ENCODE measurements at regions of chr1 and their contacts with region 1.

Region 1: DNA sequence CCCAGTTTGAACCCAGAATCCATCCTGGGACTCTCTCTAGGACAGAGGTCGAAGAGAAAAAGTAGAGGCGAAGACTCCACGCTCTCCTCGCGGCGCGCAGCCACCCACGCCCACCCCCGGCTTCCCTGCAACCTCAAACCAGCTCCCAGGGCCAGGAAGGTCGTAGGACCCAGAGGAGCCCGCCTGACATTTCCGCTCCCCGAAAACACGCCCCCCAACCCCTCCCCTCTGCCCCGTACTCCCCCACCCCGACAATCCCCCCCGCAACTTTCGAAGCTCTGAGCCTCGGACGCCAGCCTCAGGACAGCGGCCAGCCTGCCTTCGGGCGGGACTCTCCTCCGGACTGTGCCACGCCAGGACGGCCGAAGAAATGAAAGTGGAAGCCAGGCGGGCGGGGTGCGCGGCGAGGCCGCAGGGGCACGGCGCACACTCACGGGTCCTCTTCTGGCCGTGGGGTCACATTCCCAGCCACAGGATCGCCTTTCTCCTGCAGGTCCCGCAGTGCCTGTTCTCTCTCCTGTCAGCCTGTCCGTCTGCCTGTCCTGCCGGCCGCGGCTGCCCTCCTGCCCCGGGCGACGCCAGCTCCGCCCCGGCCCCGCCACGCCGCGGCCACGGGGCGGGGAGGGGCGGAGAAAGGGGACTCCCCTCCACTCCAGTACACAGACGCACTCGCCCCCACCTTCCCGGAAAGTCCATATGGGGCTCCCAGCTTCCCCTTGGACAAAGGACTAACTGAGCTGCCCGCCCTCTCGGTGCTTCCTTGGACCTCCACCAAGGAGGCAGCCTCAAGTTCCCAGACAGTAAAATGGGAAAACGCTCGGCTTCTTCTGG is at the start of gene MOB3C:
- DNase-seq: peak; percentile 62
- ATAC-seq: peak; percentile 89
- H3K4me3 Mint-ChIP-seq: peak within 1 kb of the TSS; percentile 92
- H3K27ac Mint-ChIP-seq: peak within 1 kb of the TSS; percentile 87
- H3K4me1 Mint-ChIP-seq: peaks cover 64% of the 10 kb centered on the region
- H3K27me3 Mint-ChIP-seq: no peaks in the 10 kb centered on the region
- CTCF ChIP-seq: no peak
- total RNA-seq, gene MOB3C: 9.7 and 10.7 TPM in 2 replicates

Region 2: DNA sequence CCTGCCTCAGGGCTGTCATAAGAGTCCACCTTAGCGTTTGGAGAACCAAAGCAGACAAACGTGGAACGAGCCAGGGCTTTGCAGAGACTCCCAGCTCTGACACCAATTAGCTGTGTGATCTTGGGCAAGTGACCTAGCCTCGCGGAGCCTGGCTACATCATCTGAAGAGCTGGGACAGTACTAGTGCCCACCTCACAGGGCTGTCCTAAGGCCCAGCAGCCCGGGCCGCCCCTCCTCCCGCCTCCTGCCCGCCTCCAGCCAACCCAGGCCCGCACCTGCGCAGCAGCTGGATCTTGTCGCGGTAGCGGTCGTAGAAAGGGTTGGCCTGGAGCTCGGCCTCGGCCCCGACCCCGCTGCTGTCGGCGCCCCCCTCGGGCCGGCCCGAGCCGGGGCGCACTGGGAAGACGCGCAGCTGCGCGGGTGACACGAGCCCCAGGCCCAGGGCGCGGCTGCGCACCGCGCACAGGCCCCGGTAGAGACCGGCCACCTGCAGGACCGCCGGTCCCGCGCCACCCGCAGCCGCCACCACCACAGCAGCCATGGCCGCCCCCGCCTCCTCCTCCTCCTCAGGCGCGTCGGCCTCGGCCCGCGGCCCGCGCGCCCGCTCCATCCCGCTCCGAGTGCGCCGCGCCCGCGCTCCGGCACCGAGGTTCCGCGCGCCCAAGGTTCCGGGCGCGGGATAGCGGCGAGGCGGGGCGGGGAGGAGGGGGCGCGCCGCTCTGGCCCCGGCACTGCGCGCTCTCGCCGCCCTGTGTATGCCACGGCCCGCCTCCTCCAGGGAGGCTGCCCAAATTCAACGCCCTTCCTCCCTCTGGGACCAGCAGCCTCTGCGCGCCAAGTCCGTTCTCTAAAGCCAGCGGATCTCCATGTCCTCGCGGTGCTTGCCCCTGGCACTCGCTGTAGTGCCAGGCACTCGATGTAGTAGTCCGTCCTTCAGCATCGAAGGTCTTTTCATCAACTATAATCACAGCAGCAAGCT is 51.6 kb after region 1 on chr1 and contains the start of gene ATPAF1:
- CTCF ChIA-PET with region 1: no interaction called
- POLR2A ChIA-PET with region 1: no interaction called
- intact Hi-C with region 1: loop called (anchors 5 kb)
- DNase-seq: peak; percentile 55
- ATAC-seq: peak; percentile 91
- H3K4me3 Mint-ChIP-seq: peak within 1 kb of the TSS; percentile 80
- H3K27ac Mint-ChIP-seq: no peak within 1 kb of the TSS
- H3K4me1 Mint-ChIP-seq: peaks cover 16% of the 10 kb centered on the region
- H3K27me3 Mint-ChIP-seq: no peaks in the 10 kb centered on the region
- CTCF ChIP-seq: no peak
- total RNA-seq, gene ATPAF1: 21.2 and 24.5 TPM in 2 replicates